ENCODE measurements at regions of chr11 and their contacts with region 1.

Region 1: GRCh38 chr11:6719576-6719975 is 36.4 kb upstream of the MRPL17 start:
- DNase-seq: no peak
- ATAC-seq: no peak
- H3K4me3 ChIP-seq: no peak overlapping the region
- H3K4me3 Mint-ChIP-seq: no peak overlapping the region
- H3K27ac ChIP-seq: no peak overlapping the region
- H3K27ac Mint-ChIP-seq: no peak overlapping the region
- H3K4me1 ChIP-seq: peaks cover 9 to 13% of the 10 kb centered on the region in 2 donors
- H3K4me1 Mint-ChIP-seq: peaks cover 46% of the 10 kb centered on the region
- H3K27me3 ChIP-seq: no peaks in the 10 kb centered on the region
- H3K27me3 Mint-ChIP-seq: no peaks in the 10 kb centered on the region
- CTCF ChIP-seq: no peak

Region 2: GRCh38 chr11:6737872-6738466 is 18.4 kb after region 1 on chr11:
- CTCF ChIA-PET with region 1: interaction called, 14 read pairs
- POLR2A ChIA-PET with region 1: no interaction called
- intact Hi-C with region 1: no loop called
- DNase-seq: peak; percentile 82
- ATAC-seq: peak; percentile 86
- H3K4me3 ChIP-seq: no peak overlapping the region
- H3K4me3 Mint-ChIP-seq: no peak overlapping the region
- H3K27ac ChIP-seq: peak overlapping the region in 1 of 2 donors; percentile 68
- H3K27ac Mint-ChIP-seq: peak overlapping the region; percentile 39
- H3K4me1 ChIP-seq: peaks cover 49 to 60% of the 10 kb centered on the region in 2 donors
- H3K4me1 Mint-ChIP-seq: peaks cover 77% of the 10 kb centered on the region
- H3K27me3 ChIP-seq: no peaks in the 10 kb centered on the region
- H3K27me3 Mint-ChIP-seq: no peaks in the 10 kb centered on the region
- CTCF ChIP-seq: peak; percentile 79